Heart left ventricle (tissue), 16 donors: ENCODE measurements at regions of chr6 and their contacts with region 1.

Region 1: DNA sequence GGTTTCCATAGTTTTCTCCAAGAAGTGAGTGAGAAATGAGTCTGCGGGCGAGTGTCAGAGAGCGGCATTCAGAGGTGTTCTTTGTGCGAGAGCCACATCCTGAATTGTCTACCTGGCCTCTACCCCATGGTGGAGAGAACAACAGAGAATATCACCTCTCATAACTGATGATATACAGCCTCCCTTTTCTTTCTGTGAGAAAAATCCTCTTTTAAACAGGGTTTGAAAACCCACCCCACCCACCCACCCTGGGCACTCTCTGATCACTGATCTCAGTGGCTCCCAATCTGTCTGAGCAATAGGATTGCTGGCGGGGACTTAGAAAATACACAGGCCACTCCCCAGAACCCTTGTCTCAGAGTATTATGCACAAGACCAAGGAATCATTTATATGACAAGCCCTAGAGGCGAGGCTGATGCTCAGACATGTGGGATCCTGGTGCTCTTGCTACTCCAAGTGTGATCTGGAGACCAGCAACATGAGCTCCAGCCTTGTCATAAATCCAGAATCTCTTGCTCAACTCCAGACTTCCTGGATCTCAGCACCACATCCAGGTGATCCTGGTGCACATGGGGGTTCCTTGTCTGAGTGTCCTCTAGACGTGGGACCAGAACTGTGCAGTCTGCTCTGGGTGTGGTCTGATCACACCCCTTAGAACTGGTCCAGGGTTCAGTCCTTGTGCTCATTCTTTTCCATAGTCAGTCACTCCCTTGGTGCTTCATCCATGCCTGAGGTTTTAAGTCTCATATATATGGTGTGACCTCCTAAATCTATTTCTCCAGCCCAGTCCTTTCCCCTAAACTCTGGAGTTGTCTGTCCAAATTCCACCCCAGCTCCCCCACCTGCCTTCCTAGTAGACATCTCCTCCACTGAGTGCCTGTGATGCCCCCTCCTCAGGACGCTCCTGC is 5.3 kb downstream of the HLA-B start:
- DNase-seq: no peak
- ATAC-seq: no peak
- H3K4me3 ChIP-seq: no peak overlapping the region
- H3K27ac ChIP-seq: no peak overlapping the region
- H3K4me1 ChIP-seq: peaks cover 0 to 26% (median 2%) of the 10 kb centered on the region in 12 donors
- H3K27me3 ChIP-seq: no peaks in the 10 kb centered on the region
- CTCF ChIP-seq: no peak
- POLR2A ChIP-seq: no peak

Region 2: GRCh38 chr6:31203345-31203979 is 148.2 kb before region 1 on chr6:
- intact Hi-C with region 1: loop called in 1 of 10 experiments (anchors 5 kb)
- DNase-seq: no peak
- ATAC-seq: peak in 3 of 4 donors; percentile 30 to 51 (median 42)
- H3K4me3 ChIP-seq: peak overlapping the region in 11 of 12 donors; percentile 0 to 60 (median 47)
- H3K27ac ChIP-seq: peak overlapping the region in 11 of 12 donors; percentile 69 to 96 (median 81)
- H3K4me1 ChIP-seq: peaks cover 0 to 62% (median 12%) of the 10 kb centered on the region in 12 donors
- H3K27me3 ChIP-seq: no peaks in the 10 kb centered on the region
- CTCF ChIP-seq: no peak
- POLR2A ChIP-seq: no peak

Region 3: DNA sequence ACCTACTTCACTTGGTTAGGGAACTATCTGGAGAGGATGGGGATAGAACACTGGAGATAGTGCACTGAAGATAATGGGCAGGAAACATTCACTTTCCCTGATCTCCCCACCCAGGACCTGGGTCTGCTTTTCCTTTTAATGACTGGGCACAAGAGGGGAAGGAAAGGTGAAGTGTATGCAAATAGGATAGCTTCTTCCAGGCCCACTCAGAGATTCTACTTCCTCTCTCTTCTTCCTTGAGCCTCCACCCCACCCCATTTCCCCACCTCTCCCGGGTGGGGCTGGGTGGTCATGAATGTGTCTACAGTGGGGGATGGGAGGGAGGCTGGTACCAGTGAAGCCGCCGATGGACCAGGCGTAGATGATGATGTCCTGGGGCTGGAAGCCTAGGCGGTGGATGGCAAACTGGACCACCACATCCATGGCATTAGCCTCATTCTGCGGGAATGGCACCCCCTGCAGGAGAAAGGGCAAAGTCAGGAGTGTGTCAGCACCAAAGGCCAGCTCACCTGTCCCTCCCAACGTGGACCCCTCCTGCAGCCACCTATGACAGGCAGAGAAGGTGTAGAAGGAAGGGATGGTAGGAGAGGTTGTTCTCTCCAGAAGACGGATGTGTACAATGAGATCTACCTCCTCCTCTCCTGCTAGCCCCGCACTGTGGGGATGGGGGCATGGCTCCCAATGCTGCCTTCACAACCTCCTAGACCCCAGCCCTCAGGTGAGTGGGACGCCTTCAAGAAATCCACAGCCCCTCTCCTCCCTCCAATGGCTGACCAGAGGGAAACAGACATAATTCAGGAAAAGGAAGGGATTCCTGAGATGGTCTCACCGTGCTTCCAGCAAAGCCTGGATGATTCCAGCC is 337.8 kb after region 1 on chr6:
- intact Hi-C with region 1: no loop called
- DNase-seq: peak in 1 of 5 donors; percentile 36
- ATAC-seq: no peak
- H3K4me3 ChIP-seq: no peak overlapping the region
- H3K27ac ChIP-seq: no peak overlapping the region
- H3K4me1 ChIP-seq: peaks cover 0 to 5% (median 0%) of the 10 kb centered on the region in 12 donors
- H3K27me3 ChIP-seq: no peaks in the 10 kb centered on the region
- CTCF ChIP-seq: peak in 5 of 12 donors; percentile 9 to 39 (median 29)
- POLR2A ChIP-seq: no peak